ENCODE measurements at regions of chr12 and their contacts with region 1.

Region 1: GRCh38 chr12:21657326-21658077 is at the start of gene LDHB:
- DNase-seq: peak; percentile 96
- H3K4me3 Mint-ChIP-seq: peak within 1 kb of the TSS; percentile 98
- H3K27ac Mint-ChIP-seq: peak within 1 kb of the TSS; percentile 99
- H3K4me1 Mint-ChIP-seq: peaks cover 42% of the 10 kb centered on the region
- H3K27me3 Mint-ChIP-seq: peaks cover 5% of the 10 kb centered on the region
- total RNA-seq, gene LDHB: 819 to 1,195 TPM

Region 2: DNA sequence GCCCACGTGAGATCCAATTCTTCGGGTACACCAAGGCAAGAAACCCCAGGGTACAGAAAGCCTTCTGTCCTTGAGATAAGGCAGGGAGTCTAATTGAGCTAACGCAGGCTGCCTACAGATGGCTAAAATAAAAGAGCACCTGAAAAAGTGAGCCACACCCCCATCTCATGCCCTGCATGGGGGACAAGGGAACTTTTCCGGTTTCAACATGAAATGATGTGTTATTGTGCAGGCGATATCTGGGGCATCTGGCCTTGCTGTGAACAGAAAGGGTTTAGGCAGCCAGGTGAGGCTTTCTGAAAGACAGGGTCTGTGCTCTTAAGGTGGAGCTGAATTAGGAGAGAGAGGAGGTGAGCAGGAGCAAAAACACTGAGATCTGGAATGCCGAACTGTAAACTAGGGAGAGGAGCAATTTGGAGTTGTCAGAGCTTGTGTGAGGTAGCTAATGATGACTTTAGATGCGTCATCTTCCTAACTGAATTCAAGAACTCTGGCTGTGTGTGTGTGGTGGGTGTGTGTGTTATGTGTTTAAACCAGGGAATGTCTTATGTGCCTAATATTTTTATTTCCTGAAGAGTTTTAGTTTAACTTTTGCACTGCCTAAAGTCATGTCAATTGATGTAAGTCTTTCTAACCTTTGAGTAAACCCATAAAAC is 20.2 kb after region 1 on chr12:
- CTCF ChIA-PET with region 1: interaction called, 9 read pairs
- POLR2A ChIA-PET with region 1: interaction called, 10 read pairs
- DNase-seq: no peak
- H3K4me3 Mint-ChIP-seq: no peak overlapping the region
- H3K27ac Mint-ChIP-seq: peak overlapping the region; percentile 78
- H3K4me1 Mint-ChIP-seq: peaks cover 44% of the 10 kb centered on the region
- H3K27me3 Mint-ChIP-seq: peaks cover 3% of the 10 kb centered on the region

Region 3: GRCh38 chr12:21843795-21844194 is 186.3 kb after region 1 on chr12:
- CTCF ChIA-PET with region 1: no interaction called
- POLR2A ChIA-PET with region 1: no interaction called
- DNase-seq: no peak
- H3K4me3 Mint-ChIP-seq: no peak overlapping the region
- H3K27ac Mint-ChIP-seq: no peak overlapping the region
- H3K4me1 Mint-ChIP-seq: no peaks in the 10 kb centered on the region
- H3K27me3 Mint-ChIP-seq: peaks cover 3% of the 10 kb centered on the region

Measured in activated CD4-positive, alpha-beta T cell treated with anti-CD3 and anti-CD28 coated beads, Interleukin-2, amount 10 ng/mL, durations not matched to agents 7 days and 5 days (primary cell).